ENCODE measurements at regions of chr3 and their contacts with region 1.

Region 1: GRCh38 chr3:145776782-145777408 is 384.1 kb downstream of the PLOD2 start:
- DNase-seq: peak; percentile 3
- H3K4me3 ChIP-seq: no peak overlapping the region
- H3K27ac ChIP-seq: no peak overlapping the region
- H3K27me3 ChIP-seq: no peaks in the 10 kb centered on the region
- CTCF ChIP-seq: peak; percentile 70

Region 2: DNA sequence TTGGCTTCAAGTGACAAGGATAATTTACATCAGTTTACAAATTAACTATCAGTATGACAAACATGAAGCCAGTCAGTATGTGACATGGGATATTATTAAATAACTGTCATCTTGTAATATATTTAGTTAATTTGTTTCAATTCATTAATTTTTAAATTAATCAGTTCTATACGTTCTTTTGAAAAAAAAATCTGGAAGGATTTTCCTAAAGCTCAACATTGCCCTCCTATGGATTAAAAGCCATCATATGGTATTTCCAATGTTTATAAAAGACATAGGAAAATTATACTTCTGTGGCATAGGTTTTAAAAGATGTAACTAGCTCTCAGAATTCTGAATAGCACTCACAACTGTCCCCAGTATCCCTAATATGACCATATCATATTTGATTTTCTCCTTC is 249.7 kb after region 1 on chr3:
- CTCF ChIA-PET with region 1: interaction called, 11 read pairs
- POLR2A ChIA-PET with region 1: no interaction called
- DNase-seq: no peak
- H3K4me3 ChIP-seq: no peak overlapping the region
- H3K27ac ChIP-seq: no peak overlapping the region
- H3K27me3 ChIP-seq: no peaks in the 10 kb centered on the region
- CTCF ChIP-seq: no peak

Region 3: DNA sequence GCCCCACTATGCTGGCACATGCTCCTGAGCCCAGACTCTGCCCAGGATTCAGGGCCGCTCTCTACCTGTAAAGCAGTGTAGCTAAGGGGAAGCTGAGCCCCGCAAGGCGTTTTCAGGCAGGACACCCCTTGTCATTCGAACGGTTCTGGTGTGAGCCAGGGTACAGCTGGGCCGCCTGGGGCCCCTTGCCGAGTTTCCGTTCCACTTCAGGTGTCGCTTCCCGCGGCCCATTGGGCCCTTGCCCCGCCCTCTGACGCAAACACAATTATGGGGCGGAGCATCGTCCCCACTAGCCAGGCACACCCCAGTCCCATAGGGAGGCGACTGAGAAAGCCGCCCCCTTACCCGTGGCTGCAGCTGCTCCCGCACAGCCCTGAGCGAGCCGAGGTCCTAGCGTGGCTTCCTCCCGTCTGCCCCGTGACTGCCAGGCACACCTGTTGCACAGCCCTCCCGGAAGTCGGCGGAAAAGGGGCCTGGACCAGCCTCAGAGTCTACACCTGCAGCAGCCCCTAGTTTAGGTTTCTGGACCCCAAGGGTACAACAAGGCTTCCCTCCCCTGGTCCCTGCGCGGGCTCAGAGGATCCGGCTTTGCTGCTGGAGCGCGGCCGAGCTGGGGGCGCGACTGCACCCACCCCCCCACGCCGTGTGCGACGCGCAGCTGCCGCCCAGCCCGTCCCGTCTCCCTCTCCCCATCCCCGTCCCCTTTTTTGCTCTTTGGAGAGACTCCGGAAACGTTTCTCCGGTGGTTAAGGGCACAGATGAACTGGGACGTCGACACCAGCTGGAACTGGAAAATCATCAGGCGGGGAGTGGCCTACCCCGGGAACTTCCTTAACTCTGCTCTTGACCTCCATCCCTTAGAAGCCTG is 692.5 kb after region 1 on chr3 and contains the start of gene PLSCR2:
- CTCF ChIA-PET with region 1: no interaction called
- POLR2A ChIA-PET with region 1: no interaction called
- DNase-seq: no peak
- H3K4me3 ChIP-seq: peak within 1 kb of the TSS; percentile 46
- H3K27ac ChIP-seq: no peak within 1 kb of the TSS
- H3K27me3 ChIP-seq: no peaks in the 10 kb centered on the region
- CTCF ChIP-seq: no peak
- polyA plus RNA-seq, gene PLSCR2: not detected in 2 replicates

Measured in AG04450 (cell line).